ENCODE measurements at regions of chr12 and their contacts with region 1.

Region 1: GRCh38 chr12:76790564-76791552 is 26.9 kb downstream of the ZDHHC17 start:
- DNase-seq: peak in 4 of 5 donors; percentile 45 to 57 (median 48)
- H3K4me3 ChIP-seq: no peak overlapping the region
- H3K4me3 Mint-ChIP-seq: no peak overlapping the region
- H3K27ac ChIP-seq: no peak overlapping the region
- H3K27ac Mint-ChIP-seq: peak overlapping the region in 5 of 7 donors; percentile 2 to 75 (median 30)
- H3K4me1 ChIP-seq: peaks cover 6% of the 10 kb centered on the region
- H3K4me1 Mint-ChIP-seq: peaks cover 16 to 40% (median 23%) of the 10 kb centered on the region in 4 donors
- H3K27me3 ChIP-seq: no peaks in the 10 kb centered on the region
- H3K27me3 Mint-ChIP-seq: no peaks in the 10 kb centered on the region

Region 2: GRCh38 chr12:76621582-76622024 is 169.3 kb before region 1 on chr12:
- CTCF ChIA-PET with region 1: interaction called, 155 read pairs
- POLR2A ChIA-PET with region 1: interaction called, 5 read pairs
- intact Hi-C with region 1: loop called (anchors 1 kb)
- DNase-seq: peak; percentile 63 to 71 (median 63)
- H3K4me3 ChIP-seq: no peak overlapping the region
- H3K4me3 Mint-ChIP-seq: no peak overlapping the region
- H3K27ac ChIP-seq: no peak overlapping the region
- H3K27ac Mint-ChIP-seq: no peak overlapping the region
- H3K4me1 ChIP-seq: no peaks in the 10 kb centered on the region
- H3K4me1 Mint-ChIP-seq: peaks cover 0 to 4% (median 3%) of the 10 kb centered on the region in 4 donors
- H3K27me3 ChIP-seq: no peaks in the 10 kb centered on the region
- H3K27me3 Mint-ChIP-seq: no peaks in the 10 kb centered on the region

Region 3: DNA sequence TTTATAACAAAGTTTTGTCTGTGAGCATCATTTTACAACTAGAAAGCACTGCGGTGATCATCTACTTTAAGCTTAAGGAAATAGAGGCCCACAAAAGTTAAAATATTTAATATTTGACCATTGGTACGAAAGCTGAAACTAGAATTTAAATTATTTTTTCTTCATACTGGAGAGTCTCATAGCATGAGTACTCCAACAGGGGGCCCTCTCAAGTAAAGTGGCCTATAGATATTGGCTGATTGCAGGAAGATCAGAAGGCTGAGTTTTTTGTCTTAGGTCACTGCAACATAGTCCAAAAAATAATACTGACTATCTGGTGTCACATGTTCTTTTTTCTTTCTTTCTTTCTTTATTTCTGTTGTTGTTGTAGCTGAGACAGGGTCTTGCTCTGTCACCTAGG is 102.2 kb before region 1 on chr12:
- CTCF ChIA-PET with region 1: interaction called, 19 read pairs
- POLR2A ChIA-PET with region 1: no interaction called
- intact Hi-C with region 1: loop called (anchors 1 kb)
- DNase-seq: no peak
- H3K4me3 ChIP-seq: no peak overlapping the region
- H3K4me3 Mint-ChIP-seq: no peak overlapping the region
- H3K27ac ChIP-seq: no peak overlapping the region
- H3K27ac Mint-ChIP-seq: no peak overlapping the region
- H3K4me1 ChIP-seq: no peaks in the 10 kb centered on the region
- H3K4me1 Mint-ChIP-seq: no peaks in the 10 kb centered on the region
- H3K27me3 ChIP-seq: no peaks in the 10 kb centered on the region
- H3K27me3 Mint-ChIP-seq: peaks cover 0 to 2% of the 10 kb centered on the region in 2 donors

Region 4: DNA sequence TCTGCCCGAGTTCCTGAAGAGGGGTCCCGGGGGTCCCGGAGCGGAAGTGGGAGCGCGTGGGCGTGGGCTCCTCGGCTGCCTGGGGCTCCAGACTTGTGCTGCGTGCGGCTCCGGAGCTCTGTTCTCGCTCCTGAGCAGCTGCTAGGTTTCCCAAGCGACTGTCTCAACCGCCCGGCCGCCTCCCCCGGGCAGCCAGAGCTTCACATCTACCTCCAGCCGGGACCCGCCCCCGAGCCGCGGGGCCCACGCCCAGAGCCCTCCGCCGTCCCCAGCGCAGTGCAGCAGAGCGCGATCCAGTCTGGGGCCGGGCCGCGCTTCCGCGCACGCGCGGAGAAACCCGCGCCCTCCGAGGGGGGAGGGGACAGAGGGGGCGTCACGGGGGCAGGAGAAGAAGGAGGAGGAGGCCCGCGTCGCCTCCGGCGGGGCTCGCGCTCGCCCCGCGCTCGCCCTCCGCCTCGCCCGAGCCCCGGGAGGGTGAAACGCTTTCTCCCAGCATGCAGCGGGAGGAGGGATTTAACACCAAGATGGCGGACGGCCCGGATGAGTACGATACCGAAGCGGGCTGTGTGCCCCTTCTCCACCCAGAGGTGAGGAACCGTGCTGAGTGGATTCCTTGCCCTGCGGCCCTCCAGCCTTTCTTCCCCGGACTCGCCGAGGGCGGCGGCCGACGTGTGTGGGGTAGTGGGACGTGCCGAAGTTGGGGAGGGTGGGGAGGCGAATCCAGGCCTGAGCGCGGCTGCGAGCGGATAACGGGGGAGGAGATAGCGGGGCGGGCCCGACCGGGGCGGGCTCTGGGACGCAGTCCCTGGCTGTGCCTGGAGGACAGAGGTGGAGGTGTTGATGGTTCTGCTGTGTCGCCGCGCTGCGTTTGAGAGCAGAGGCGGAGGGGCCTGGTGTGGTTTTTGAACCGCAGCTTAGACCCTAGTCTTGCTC is 26.8 kb before region 1 on chr12 and contains the start of gene ZDHHC17:
- CTCF ChIA-PET with region 1: interaction called, 15 read pairs
- POLR2A ChIA-PET with region 1: interaction called, 3 read pairs
- intact Hi-C with region 1: loop called (anchors 2 kb)
- DNase-seq: peak; percentile 92 to 94 (median 93)
- H3K4me3 ChIP-seq: peak within 1 kb of the TSS; percentile 54 to 78
- H3K4me3 Mint-ChIP-seq: peak within 1 kb of the TSS; percentile 97 to 98 (median 98)
- H3K27ac ChIP-seq: peak within 1 kb of the TSS; percentile 90
- H3K27ac Mint-ChIP-seq: peak within 1 kb of the TSS; percentile 95 to 99 (median 98)
- H3K4me1 ChIP-seq: peaks cover 36% of the 10 kb centered on the region
- H3K4me1 Mint-ChIP-seq: peaks cover 21 to 53% (median 35%) of the 10 kb centered on the region in 4 donors
- H3K27me3 ChIP-seq: no peaks in the 10 kb centered on the region
- H3K27me3 Mint-ChIP-seq: no peaks in the 10 kb centered on the region
- total RNA-seq, gene ZDHHC17: 51.5 to 52.9 TPM

Region 5: GRCh38 chr12:76777765-76778216 is 13.1 kb before region 1 on chr12:
- CTCF ChIA-PET with region 1: interaction called, 16 read pairs
- POLR2A ChIA-PET with region 1: no interaction called
- intact Hi-C with region 1: no loop called
- DNase-seq: no peak
- H3K4me3 ChIP-seq: no peak overlapping the region
- H3K4me3 Mint-ChIP-seq: peak overlapping the region in 3 of 8 donors; percentile 24 to 66 (median 42)
- H3K27ac ChIP-seq: no peak overlapping the region
- H3K27ac Mint-ChIP-seq: peak overlapping the region in 3 of 7 donors; percentile 7 to 74 (median 28)
- H3K4me1 ChIP-seq: peaks cover 25% of the 10 kb centered on the region
- H3K4me1 Mint-ChIP-seq: peaks cover 45 to 78% (median 64%) of the 10 kb centered on the region in 4 donors
- H3K27me3 ChIP-seq: no peaks in the 10 kb centered on the region
- H3K27me3 Mint-ChIP-seq: no peaks in the 10 kb centered on the region

Region 6: DNA sequence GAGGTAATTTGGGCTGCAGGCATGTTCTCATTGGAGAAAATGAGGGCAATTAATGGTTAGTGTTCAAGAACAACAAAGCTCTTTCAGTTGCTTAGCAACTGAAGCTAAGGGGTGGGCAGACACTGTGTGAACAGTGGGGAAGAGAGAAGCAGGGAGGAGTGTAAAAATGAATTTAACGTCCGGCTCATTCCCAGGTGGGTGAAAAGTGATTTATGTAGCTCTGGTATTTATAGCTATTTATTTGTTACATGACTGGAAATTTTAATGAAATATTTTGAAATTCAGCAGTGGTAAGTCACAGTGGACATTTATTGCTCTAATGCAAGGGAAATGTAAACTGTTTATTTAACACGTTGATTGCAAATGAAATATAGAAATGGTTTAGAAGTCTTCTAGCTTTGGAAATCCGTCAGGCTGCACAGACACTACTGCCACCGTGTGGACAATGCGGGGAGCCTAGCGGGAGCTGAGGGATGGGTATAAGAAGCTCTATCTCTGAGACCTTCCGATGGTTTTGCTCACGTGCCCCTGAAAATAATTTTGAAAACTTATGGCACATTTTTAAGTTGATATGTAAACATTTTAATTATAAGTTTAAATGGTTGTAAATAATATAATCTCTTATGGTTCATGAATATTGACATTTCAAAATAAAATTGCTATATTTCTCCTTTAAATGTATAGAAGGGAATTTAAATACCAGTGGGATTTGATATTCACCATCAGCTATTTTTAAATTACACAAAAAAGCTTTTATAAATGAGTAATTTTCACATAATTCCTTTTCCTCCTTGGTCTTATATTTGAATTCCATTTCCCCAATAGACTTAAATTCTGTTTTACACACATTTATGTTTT is 220.1 kb after region 1 on chr12:
- CTCF ChIA-PET with region 1: interaction called, 14 read pairs
- POLR2A ChIA-PET with region 1: no interaction called
- intact Hi-C with region 1: loop called (anchors 1 kb)
- DNase-seq: peak; percentile 35 to 53 (median 43)
- H3K4me3 ChIP-seq: no peak overlapping the region
- H3K4me3 Mint-ChIP-seq: peak overlapping the region in 1 of 8 donors; percentile 5
- H3K27ac ChIP-seq: no peak overlapping the region
- H3K27ac Mint-ChIP-seq: no peak overlapping the region
- H3K4me1 ChIP-seq: no peaks in the 10 kb centered on the region
- H3K4me1 Mint-ChIP-seq: peaks cover 5 to 7% (median 5%) of the 10 kb centered on the region in 4 donors
- H3K27me3 ChIP-seq: no peaks in the 10 kb centered on the region
- H3K27me3 Mint-ChIP-seq: peaks cover 16 to 17% of the 10 kb centered on the region in 2 donors